ENCODE measurements at regions of chr3 and their contacts with region 1.

Region 1: DNA sequence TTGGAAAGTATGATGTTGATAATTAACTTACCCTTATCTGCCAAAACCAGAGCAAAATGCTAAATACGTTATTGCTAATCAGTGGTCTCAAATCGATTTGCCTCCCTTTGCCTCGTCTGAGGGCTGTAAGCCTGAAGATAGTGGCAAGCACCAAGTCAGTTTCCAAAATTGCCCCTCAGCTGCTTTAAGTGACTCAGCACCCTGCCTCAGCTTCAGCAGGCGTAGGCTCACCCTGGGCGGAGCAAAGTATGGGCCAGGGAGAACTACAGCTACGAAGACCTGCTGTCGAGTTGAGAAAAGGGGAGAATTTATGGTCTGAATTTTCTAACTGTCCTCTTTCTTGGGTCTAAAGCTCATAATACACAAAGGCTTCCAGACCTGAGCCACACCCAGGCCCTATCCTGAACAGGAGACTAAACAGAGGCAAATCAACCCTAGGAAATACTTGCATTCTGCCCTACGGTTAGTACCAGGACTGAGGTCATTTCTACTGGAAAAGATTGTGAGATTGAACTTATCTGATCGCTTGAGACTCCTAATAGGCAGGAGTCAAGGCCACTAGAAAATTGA is 59.7 kb downstream of the DCUN1D1 start:
- DNase-seq: peak; percentile 15 to 63 (median 38)
- H3K4me3 ChIP-seq: no peak overlapping the region
- H3K27ac ChIP-seq: peak overlapping the region in 1 of 2 experiments; percentile 75
- H3K4me1 ChIP-seq: peaks cover 0 to 5% (median 0%) of the 10 kb centered on the region in 4 experiments
- H3K27me3 ChIP-seq: no peaks in the 10 kb centered on the region

Region 2: GRCh38 chr3:182909318-182910040 is 11.1 kb before region 1 on chr3:
- CTCF ChIA-PET with region 1: interaction called, 10 read pairs
- POLR2A ChIA-PET with region 1: no interaction called
- DNase-seq: peak; percentile 28 to 58 (median 51)
- H3K4me3 ChIP-seq: no peak overlapping the region
- H3K27ac ChIP-seq: no peak overlapping the region
- H3K4me1 ChIP-seq: peaks cover 5 to 10% (median 8%) of the 10 kb centered on the region in 4 experiments
- H3K27me3 ChIP-seq: no peaks in the 10 kb centered on the region

Region 3: DNA sequence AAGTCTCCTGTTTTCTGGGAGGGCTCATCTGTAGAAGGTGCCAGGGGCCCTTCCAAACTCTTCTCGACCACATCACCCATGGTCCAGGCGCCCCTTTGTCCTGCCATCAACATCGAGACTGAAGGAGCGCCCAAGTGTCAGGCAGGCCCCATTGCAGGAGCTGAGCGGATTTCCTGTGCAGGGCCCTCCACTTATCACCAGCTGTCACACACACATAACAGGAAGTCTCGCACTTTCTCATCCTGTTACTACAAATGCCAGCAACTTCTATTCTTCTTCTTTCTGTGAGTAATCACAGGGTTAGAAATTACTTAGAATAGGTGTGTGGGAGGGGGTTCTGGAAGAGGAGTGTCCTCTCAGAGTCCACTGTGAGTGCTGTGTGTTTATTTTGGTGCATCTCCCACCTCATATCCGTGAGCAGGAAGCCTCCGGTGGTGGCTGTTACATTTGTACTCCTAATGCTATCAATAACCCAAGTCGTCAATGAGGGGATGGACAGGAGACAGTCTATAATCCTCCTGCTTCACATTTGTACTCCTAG is 635.0 kb after region 1 on chr3 and contains the start of gene KLHL6:
- CTCF ChIA-PET with region 1: no interaction called
- POLR2A ChIA-PET with region 1: no interaction called
- DNase-seq: peak; percentile 93 to 98 (median 95)
- H3K4me3 ChIP-seq: peak within 1 kb of the TSS; percentile 33 to 88 (median 82)
- H3K27ac ChIP-seq: peak within 1 kb of the TSS; percentile 87 to 91
- H3K4me1 ChIP-seq: peaks cover 17 to 71% (median 39%) of the 10 kb centered on the region in 4 experiments
- H3K27me3 ChIP-seq: no peaks in the 10 kb centered on the region